H1 (cell line): ENCODE measurements at regions of chr11 and their contacts with region 1.

Region 1: DNA sequence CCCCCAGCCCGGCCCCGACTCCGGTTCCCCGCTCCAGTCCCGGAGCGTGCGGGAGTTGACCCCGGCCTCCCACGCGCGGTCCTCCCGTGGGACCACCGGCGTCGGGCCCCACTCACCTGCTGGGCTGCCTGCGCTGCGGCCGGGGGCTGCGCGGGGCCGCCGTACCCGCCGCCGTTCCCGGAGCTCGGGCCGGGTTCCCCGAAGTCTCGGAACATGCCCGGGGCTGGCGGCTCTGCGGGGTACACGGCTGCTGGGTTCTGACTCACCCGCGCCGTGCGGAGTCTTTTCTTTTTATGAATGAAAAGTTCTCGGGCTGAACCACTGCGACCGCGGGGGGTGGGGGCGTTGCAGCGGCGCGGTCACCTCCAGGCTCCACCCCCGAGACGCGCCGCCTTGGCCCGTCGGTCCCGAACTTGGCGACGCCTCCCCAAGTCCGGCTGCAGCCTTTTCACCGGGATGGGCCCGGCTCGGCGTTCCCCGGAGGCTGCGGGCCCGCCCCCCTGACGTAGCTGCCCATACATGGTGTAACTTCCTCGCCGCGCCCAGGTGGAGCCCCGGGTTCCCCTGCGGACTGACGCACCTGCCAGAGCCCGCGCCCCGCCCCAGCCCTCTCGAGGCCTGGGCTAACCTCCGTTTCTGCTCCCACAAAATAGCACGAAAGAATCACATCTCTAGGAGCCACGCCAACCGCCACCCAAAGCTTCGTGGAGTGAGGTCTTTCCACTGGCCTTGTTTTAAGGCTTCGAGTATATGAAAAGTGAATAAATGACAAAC is at the start of gene FOSL1:
- DNase-seq: peak; percentile 91 to 93
- H3K4me3 ChIP-seq: peak within 1 kb of the TSS; percentile 39 to 71 (median 52)
- H3K27ac ChIP-seq: no peak within 1 kb of the TSS
- H3K4me1 ChIP-seq: peaks cover 3 to 11% (median 8%) of the 10 kb centered on the region in 4 experiments; a peak in 6 of 7 replicates
- H3K27me3 ChIP-seq: peaks cover 15 to 41% (median 36%) of the 10 kb centered on the region in 4 experiments
- CTCF ChIP-seq: no peak
- EP300 ChIP-seq: peak in 1 of 2 experiments; percentile 76; a peak in 1 of 3 replicates
- POLR2A ChIP-seq: peak in 1 of 2 experiments; percentile 61; a peak in 2 of 3 replicates
- RAD21 ChIP-seq: no peak
- total RNA-seq, gene FOSL1: 6.3 and 7.5 TPM in 2 replicates

Region 2: GRCh38 chr11:65817835-65818742 is 82.2 kb before region 1 on chr11:
- CTCF ChIA-PET with region 1: no interaction called
- POLR2A ChIA-PET with region 1: no interaction called
- DNase-seq: peak; percentile 53 to 99
- H3K4me3 ChIP-seq: peak overlapping the region; percentile 41 to 74 (median 67)
- H3K27ac ChIP-seq: no peak overlapping the region
- H3K4me1 ChIP-seq: no peaks in the 10 kb centered on the region
- H3K27me3 ChIP-seq: peaks cover 0 to 11% (median 4%) of the 10 kb centered on the region in 4 experiments; a peak in 4 of 7 replicates
- CTCF ChIP-seq: peak; percentile 99 to 100 (median 99)
- EP300 ChIP-seq: peak in 1 of 2 experiments; percentile 28; a peak in 1 of 3 replicates
- POLR2A ChIP-seq: no peak
- RAD21 ChIP-seq: peak; percentile 91 to 95

Region 3: DNA sequence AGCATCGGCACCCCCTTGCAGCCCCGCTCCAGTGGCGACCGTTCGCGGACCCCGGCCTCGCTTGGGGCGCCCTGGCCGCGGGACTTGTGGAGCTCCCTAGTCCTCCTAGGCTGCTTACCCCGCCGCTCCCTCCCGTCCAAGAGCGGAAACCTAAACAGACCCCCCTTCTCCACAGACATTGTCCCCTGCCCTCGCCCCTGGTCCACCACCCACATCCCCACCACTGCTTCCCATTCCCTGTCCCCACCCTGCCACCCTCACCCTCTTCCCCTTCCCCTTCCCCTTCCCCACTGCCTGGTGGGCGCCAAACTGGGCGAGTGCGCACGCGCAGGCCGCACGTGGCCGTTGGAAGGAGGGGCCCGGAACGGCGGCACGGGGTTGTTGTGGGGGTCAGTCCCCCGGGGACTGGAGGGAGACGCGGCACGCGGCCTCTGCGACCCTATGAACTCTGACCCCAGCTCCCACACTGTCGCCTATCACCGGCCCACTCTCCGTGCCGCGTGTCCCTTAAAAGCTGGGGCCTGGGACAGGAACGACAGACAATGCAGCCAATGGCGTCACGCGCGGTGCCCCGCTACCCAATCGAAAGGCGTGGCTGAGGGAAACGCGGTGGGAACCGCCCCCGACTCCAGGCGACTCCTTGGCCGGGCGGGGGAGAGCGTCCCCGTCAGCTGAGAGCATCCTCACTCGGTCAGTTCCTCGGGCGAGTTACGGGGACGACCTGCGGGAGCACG is 66.8 kb before region 1 on chr11 and contains the start of gene SNX32:
- CTCF ChIA-PET with region 1: no interaction called
- POLR2A ChIA-PET with region 1: no interaction called
- DNase-seq: peak in 1 of 2 experiments; percentile 97
- H3K4me3 ChIP-seq: peak within 1 kb of the TSS; percentile 68 to 72 (median 70)
- H3K27ac ChIP-seq: peak within 1 kb of the TSS; percentile 70; the same call in 1 of the 2 replicates
- H3K4me1 ChIP-seq: peaks cover 0 to 8% (median 6%) of the 10 kb centered on the region in 4 experiments; a peak in 6 of 7 replicates
- H3K27me3 ChIP-seq: peaks cover 0 to 9% (median 6%) of the 10 kb centered on the region in 4 experiments; a peak in 4 of 7 replicates
- CTCF ChIP-seq: no peak
- EP300 ChIP-seq: no peak
- POLR2A ChIP-seq: peak in 1 of 2 experiments; percentile 41; a peak in 1 of 3 replicates
- RAD21 ChIP-seq: no peak
- total RNA-seq, gene SNX32: 1.1 and 2.2 TPM in 2 replicates

Region 4: DNA sequence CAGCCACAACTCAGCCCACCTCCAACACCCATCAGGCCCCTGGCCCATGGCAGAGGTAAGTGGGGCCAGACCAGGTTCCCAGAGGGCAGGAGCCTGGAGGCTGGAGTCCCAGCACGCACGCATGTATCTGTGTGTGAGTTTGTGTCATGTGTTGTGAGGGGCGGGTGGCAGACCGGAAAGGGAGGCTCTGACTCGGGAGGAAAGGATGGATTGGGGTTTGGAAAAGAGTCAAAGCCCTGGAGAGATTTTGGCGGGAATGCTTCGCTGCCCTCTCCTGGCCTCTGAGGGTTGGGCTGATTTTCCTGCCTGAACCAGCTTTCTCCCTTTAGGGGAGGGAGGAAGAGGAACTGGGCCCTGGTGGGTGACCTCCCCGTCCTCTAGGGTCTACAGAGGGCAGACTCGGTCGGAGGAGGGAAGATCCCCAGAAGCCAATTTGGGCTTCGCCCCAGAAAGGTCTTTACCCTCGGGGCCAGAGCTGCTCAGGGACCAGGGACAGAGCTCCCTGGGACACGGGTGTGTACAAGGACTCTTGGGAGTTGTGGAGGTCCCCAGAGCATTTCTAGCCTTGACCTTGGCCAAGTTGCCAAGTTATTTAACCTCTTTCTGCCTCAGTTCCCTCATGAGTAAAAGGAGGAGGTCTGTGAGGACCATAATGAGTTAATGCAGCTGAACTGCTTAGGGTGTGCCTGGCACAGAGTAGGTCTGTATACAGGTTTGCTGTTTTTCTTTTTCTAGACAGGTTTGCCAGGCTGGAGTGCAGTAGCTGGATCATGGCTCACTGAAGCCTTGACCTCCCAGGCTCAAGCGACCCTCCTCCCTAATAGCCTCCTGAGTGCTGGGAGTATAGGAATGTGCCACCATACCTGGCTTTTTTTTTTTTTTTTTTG is 11.6 kb after region 1 on chr11:
- CTCF ChIA-PET with region 1: interaction called, 212 read pairs
- POLR2A ChIA-PET with region 1: interaction called, 6 read pairs
- DNase-seq: peak in 1 of 2 experiments; percentile 73
- H3K4me3 ChIP-seq: no peak overlapping the region
- H3K27ac ChIP-seq: no peak overlapping the region
- H3K4me1 ChIP-seq: peaks cover 2 to 7% (median 5%) of the 10 kb centered on the region in 4 experiments; a peak in 5 of 7 replicates
- H3K27me3 ChIP-seq: peaks cover 0 to 11% (median 2%) of the 10 kb centered on the region in 4 experiments; a peak in 4 of 7 replicates
- CTCF ChIP-seq: peak; percentile 31 to 61 (median 60)
- EP300 ChIP-seq: no peak
- POLR2A ChIP-seq: no peak; a peak in 1 of 3 replicates
- RAD21 ChIP-seq: peak; percentile 42 to 64

Region 5: DNA sequence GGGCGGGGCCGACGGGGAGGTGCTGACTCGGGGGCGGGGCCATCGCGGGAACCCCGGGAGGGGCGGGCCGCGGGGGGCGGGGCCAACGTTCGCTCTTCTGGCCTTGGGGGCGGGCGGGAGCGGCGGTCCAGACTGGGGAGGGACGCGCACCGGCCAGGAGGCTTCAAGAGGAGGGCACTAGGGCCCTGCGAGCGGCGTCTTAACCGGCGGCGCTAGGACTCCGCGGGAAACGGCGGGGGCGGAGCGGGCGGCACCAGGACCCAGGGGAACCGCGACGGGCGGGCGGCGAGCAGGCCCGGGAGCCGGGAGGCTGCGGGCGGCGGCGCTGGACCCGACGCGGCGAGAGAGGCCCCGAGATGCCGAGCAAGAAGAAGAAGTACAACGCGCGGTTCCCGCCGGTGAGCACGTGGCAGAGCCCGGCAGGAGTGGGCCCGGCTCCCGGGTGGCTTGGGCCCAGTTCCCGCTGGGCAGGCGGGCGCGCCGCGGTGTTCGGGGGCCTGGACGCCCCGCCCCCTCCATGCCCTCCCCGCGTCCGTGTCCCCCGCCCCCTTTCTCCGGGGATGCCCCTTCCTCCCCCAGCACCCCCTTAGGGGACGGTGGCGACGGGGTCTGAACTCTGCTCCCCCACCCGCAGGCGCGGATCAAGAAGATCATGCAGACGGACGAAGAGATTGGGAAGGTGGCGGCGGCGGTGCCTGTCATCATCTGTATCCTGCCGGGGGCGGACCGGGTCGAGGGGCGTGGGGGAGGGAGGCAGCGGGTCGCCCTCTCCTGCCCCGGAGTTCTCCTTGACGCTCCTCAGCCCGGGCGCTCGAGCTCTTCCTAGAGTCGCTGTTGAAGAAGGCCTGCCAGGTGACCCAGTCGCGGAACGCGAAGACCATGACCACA is 19.1 kb after region 1 on chr11 and contains the start of gene DRAP1:
- CTCF ChIA-PET with region 1: interaction called, 212 read pairs
- POLR2A ChIA-PET with region 1: interaction called, 10 read pairs
- DNase-seq: peak; percentile 85 to 95
- H3K4me3 ChIP-seq: peak within 1 kb of the TSS; percentile 91 to 98 (median 94)
- H3K27ac ChIP-seq: peak within 1 kb of the TSS; percentile 80
- H3K4me1 ChIP-seq: peaks cover 0 to 22% (median 13%) of the 10 kb centered on the region in 4 experiments; a peak in 4 of 7 replicates
- H3K27me3 ChIP-seq: no peaks in the 10 kb centered on the region
- CTCF ChIP-seq: no peak
- EP300 ChIP-seq: peak in 1 of 2 experiments; percentile 71; a peak in 1 of 3 replicates
- POLR2A ChIP-seq: peak; percentile 46 to 58
- RAD21 ChIP-seq: peak in 1 of 2 experiments; percentile 29; a peak in 2 of 4 replicates
- total RNA-seq, gene DRAP1: 98.7 and 108 TPM in 2 replicates

Region 6: GRCh38 chr11:65927904-65928397 is 27.6 kb after region 1 on chr11:
- CTCF ChIA-PET with region 1: interaction called, 16 read pairs
- POLR2A ChIA-PET with region 1: no interaction called
- DNase-seq: no peak
- H3K4me3 ChIP-seq: no peak overlapping the region
- H3K27ac ChIP-seq: peak overlapping the region; percentile 41; the same call in 1 of the 2 replicates
- H3K4me1 ChIP-seq: peaks cover 0 to 8% (median 5%) of the 10 kb centered on the region in 4 experiments; a peak in 5 of 7 replicates
- H3K27me3 ChIP-seq: no peaks in the 10 kb centered on the region
- CTCF ChIP-seq: no peak
- EP300 ChIP-seq: no peak
- POLR2A ChIP-seq: no peak
- RAD21 ChIP-seq: no peak